ENCODE measurements at regions of chr10 and their contacts with region 1.

Region 1: GRCh38 chr10:80158598-80159127 is 26.1 kb downstream of the PLAC9 start:
- DNase-seq: peak; percentile 90
- ATAC-seq: peak; percentile 93

Region 2: GRCh38 chr10:78255796-78256638 is 1902.6 kb before region 1 on chr10:
- intact Hi-C with region 1: no loop called
- DNase-seq: no peak
- ATAC-seq: peak; percentile 81

Region 3: GRCh38 chr10:80090121-80090520 is 68.5 kb before region 1 on chr10:
- intact Hi-C with region 1: no loop called
- DNase-seq: no peak
- ATAC-seq: no peak

Region 4: DNA sequence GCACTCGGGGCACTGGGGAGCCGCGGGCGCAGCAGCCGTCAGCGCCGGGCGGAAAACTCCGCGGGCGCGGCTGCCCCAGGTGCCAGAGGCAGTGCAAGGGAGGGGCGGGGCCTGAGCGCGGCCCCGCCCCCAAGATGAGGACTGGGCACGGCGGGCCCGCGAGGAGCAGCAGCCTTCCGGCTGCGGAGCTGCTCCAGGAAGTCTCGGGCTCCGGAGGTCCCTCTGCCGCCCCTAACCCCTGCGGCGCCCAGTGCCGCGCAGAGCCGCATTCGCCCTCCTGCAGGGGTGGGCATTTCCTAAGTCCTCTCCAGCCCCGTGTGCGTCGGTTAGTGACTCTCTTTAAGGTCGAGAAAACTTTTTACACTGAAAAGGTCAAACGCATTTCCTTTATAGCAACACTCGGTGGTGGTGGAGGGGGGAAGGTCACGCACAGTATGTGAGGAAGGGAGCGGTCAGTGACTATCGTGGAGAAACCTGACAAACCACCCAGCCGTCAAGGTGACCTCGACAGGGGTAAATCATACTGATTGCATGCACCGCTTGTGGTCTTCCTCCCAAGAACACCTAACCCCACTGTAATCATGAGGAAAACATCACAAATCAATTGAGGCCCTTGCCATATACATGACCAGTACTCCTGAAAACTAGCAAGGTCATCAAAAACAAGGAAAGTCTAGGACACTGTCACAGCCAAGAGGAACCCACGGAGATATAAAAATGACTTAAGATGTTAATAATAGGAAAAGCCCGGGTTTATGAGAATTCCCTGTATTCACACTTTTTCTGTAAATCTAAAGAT is 47.0 kb after region 1 on chr10 and contains the start of gene ANXA11:
- intact Hi-C with region 1: loop called (anchors 10 kb)
- DNase-seq: peak; percentile 88
- ATAC-seq: peak; percentile 86
- total RNA-seq, gene ANXA11: 205 TPM

Region 5: DNA sequence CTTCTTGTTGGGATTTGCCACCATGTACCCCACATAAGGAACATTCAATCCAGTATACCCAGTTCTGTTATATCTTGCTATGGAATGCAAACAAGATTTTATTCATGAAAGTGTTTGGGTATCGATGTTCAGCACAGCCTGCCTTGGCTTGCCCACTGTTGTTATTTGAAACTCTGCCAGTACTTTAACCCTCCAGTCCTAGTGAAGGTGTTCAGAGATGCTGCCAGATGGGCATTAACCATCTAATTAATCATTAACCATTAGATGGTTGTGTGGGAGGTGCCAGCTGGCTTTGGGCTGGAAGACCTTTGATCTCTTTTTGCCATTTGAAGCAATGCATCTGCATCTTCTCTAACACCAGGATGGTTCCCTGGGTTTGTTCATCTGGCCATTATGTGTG is 742.0 kb after region 1 on chr10:
- intact Hi-C with region 1: no loop called
- DNase-seq: no peak
- ATAC-seq: no peak